H1 (cell line): ENCODE measurements at regions of chr19 and their contacts with region 1.

Region 1: GRCh38 chr19:48102870-48103751 is 7.5 kb downstream of the PLA2G4C start:
- DNase-seq: peak in 1 of 2 experiments; percentile 85
- H3K4me3 ChIP-seq: peak overlapping the region in 1 of 4 experiments; percentile 26; a peak in 2 of 8 replicates
- H3K27ac ChIP-seq: no peak overlapping the region
- H3K4me1 ChIP-seq: no peaks in the 10 kb centered on the region
- H3K27me3 ChIP-seq: no peaks in the 10 kb centered on the region
- CTCF ChIP-seq: peak; percentile 71 to 92 (median 85)
- EP300 ChIP-seq: no peak
- POLR2A ChIP-seq: no peak
- RAD21 ChIP-seq: peak; percentile 84 to 93

Region 2: GRCh38 chr19:48061401-48062344 is 41.4 kb before region 1 on chr19:
- CTCF ChIA-PET with region 1: interaction called, 14 read pairs
- POLR2A ChIA-PET with region 1: no interaction called
- DNase-seq: peak; percentile 9 to 74
- H3K4me3 ChIP-seq: peak overlapping the region; percentile 7 to 48 (median 19); a peak in 5 of 8 replicates
- H3K27ac ChIP-seq: no peak overlapping the region; the same call in 1 of the 2 replicates
- H3K4me1 ChIP-seq: peaks cover 4 to 16% (median 7%) of the 10 kb centered on the region in 4 experiments; a peak in 6 of 7 replicates
- H3K27me3 ChIP-seq: no peaks in the 10 kb centered on the region
- CTCF ChIP-seq: peak; percentile 14 to 41 (median 39); a peak in 3 of 4 replicates
- EP300 ChIP-seq: no peak; a peak in 1 of 3 replicates
- POLR2A ChIP-seq: peak in 1 of 2 experiments; percentile 32; a peak in 1 of 3 replicates
- RAD21 ChIP-seq: peak in 1 of 2 experiments; percentile 43; a peak in 3 of 4 replicates

Region 3: DNA sequence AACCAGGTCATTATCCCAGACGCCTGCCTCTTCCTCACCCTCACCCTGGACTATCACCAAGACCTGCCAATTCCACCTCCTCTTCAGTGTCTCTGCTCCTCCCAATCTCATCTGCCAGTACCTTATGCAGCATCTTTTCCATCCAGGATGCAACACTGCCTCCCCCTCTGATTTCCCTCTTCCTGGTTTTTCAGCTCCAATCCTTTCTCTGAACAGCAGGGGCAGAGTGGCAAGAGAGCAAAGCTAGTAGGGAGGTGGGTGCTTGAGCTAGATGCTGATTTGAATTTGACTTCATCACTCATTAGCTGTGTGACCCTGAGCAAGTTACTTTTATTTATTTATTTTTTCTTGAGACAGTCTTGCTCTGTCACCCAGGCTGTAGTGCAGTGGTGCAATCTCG is 33.7 kb before region 1 on chr19:
- CTCF ChIA-PET with region 1: interaction called, 17 read pairs
- POLR2A ChIA-PET with region 1: no interaction called
- DNase-seq: no peak
- H3K4me3 ChIP-seq: no peak overlapping the region
- H3K27ac ChIP-seq: no peak overlapping the region
- H3K4me1 ChIP-seq: 0 out of 7 replicates have a peak, but pooled peaks cover 0 to 2% (median 0%) of the 10 kb centered on the region in 4 experiments
- H3K27me3 ChIP-seq: no peaks in the 10 kb centered on the region
- CTCF ChIP-seq: peak; percentile 25 to 55 (median 41); a peak in 3 of 4 replicates
- EP300 ChIP-seq: no peak
- POLR2A ChIP-seq: no peak
- RAD21 ChIP-seq: peak; percentile 16 to 50; a peak in 3 of 4 replicates

Region 4: DNA sequence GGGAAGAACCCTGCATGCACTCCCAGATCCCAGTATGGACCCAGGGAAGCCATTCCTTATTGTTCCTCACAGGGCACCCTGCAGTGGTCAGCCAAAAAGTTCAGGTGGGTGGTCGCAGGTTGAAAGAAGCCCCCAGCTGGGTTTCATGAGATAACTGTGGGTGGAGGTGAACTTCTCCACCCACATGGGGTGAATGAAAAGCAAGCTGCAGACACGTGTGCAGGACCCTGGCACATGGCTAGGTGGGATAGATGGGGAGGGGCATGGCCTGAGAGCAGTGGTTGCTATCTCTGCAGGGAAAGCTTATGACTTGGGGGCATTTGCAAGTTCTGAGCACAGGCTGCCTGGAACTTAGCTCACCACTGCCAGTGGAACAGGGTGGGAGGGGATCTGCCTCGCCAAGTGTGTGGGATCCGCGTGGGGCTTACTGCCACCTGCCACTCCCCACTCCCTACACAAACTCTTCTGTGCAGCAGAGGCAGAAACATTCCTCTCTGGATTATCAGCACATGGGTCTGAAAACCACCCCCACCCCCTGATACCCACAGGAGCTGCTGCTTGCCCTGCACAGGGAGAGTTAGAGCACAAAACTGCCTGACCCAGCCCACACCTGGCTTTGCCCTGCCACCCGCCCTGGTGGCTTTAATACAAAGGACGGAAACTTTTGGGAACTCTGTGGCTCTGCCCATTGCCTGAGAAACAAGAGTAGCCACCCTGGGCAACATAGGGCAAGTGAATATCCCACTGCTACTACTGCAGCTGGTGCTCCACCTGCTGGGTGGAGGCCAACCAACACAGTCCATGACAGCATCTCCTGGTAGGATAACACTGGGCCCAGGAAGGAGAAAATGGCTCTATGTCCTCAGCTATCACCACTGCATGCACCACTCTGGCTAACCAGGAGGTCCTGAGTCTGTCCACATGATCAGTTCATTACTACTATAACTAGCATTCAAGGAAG is 16.9 kb before region 1 on chr19:
- CTCF ChIA-PET with region 1: interaction called, 43 read pairs
- POLR2A ChIA-PET with region 1: no interaction called
- DNase-seq: peak in 1 of 2 experiments; percentile 67
- H3K4me3 ChIP-seq: no peak overlapping the region
- H3K27ac ChIP-seq: no peak overlapping the region
- H3K4me1 ChIP-seq: no peaks in the 10 kb centered on the region; a peak in 1 of 7 replicates
- H3K27me3 ChIP-seq: no peaks in the 10 kb centered on the region; a peak in 2 of 7 replicates
- CTCF ChIP-seq: peak; percentile 68 to 78 (median 73)
- EP300 ChIP-seq: no peak
- POLR2A ChIP-seq: 0 out of 3 replicates have a peak, but pooled peaks of 1 of the 2 experiments have one; percentile 23
- RAD21 ChIP-seq: peak; percentile 55 to 71

Region 5: GRCh38 chr19:48152551-48152950 is 49.4 kb after region 1 on chr19:
- CTCF ChIA-PET with region 1: interaction called, 22 read pairs
- POLR2A ChIA-PET with region 1: no interaction called
- DNase-seq: peak in 1 of 2 experiments; percentile 81
- H3K4me3 ChIP-seq: no peak overlapping the region
- H3K27ac ChIP-seq: no peak overlapping the region
- H3K4me1 ChIP-seq: no peaks in the 10 kb centered on the region
- H3K27me3 ChIP-seq: no peaks in the 10 kb centered on the region; a peak in 1 of 7 replicates
- CTCF ChIP-seq: peak in 2 of 3 experiments; percentile 72 to 73; a peak in 3 of 4 replicates
- EP300 ChIP-seq: no peak
- POLR2A ChIP-seq: no peak
- RAD21 ChIP-seq: peak; percentile 69 to 74